ENCODE measurements at regions of chr5 and their contacts with region 1.

Region 1: DNA sequence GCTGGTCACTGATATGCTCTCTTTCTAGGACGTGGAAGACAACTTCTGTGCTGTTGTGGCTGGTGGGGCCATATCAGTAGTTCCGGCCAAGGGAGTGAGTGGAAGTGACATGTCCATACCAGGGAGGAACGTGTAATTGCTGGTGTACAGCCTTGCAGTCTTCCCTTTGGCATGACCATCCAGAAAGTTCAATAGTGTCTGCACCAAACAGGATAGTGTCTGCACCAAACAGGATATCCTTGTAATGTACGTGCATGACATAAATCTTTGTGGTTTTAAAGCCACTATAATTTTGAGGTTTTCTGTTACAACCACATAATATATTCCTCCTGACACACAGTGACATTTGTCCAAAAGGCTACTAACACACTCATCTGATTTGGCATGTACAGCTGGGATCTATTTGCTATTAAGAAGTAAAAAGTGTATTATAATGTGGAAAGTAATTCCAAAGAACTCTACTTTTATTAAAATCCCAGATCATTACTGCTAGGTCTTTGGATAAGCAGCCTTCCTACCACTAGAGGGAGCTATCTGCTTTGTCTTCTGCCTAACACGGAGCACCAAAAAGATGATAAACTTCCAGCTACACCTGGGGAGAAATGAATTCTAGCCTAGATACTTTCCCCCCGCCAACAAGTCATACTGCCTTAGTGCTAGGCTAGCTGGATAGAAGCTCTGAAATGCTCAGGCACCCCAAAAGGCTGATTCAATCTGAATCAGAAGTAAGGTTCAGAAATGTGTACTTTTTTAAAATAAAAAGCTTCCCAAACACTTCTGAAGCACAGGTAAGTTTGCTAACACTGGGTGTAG is 52.7 kb downstream of the RNF145 start:
- DNase-seq: peak; percentile 25
- H3K4me3 Mint-ChIP-seq: no peak overlapping the region
- H3K27ac Mint-ChIP-seq: no peak overlapping the region
- H3K4me1 Mint-ChIP-seq: peaks cover 42% of the 10 kb centered on the region
- H3K27me3 Mint-ChIP-seq: no peaks in the 10 kb centered on the region

Region 2: DNA sequence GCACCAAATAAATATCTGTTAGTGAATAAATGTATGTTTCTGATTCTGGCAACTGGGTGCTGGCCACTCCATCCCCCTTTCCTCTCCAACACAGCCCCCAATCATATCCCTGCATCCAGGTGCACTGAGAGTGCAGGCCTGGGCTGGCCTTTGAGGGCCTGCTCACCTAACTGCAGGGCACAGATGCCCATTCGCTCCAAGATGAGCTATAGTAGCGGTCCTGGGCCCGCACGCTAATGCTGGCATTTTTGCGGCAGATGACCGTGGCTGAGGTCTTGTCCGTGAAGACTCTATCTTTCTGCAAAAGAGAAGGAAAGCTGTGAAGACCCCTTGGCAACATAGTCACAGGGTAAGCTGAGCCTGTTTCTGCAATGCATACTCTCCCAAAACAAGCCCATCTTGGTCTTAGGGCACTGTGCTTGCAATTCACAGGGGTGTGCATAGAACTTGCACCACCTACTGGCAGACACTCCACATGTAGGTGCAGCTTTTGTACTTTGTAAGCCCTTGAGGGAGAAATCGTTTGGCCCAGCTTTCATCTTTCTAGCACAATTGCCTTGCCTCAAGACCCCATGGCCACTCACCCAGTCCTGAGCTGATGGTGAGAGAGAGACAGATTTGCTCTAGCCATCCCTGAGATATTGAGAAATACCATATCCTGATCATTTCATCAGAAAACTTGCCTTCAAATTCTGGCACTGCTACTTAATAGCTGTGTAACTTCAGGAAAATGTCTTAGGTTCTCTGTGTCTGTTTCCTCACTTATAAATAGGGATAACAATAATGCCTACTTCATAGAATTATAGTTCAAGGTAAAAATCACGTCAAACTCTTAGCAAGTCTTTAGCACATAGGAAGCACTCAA is 160.1 kb after region 1 on chr5:
- intact Hi-C with region 1: loop called (anchors 1 kb)
- DNase-seq: peak; percentile 20
- H3K4me3 Mint-ChIP-seq: no peak overlapping the region
- H3K27ac Mint-ChIP-seq: no peak overlapping the region
- H3K4me1 Mint-ChIP-seq: no peaks in the 10 kb centered on the region
- H3K27me3 Mint-ChIP-seq: peaks cover 19% of the 10 kb centered on the region

Region 3: DNA sequence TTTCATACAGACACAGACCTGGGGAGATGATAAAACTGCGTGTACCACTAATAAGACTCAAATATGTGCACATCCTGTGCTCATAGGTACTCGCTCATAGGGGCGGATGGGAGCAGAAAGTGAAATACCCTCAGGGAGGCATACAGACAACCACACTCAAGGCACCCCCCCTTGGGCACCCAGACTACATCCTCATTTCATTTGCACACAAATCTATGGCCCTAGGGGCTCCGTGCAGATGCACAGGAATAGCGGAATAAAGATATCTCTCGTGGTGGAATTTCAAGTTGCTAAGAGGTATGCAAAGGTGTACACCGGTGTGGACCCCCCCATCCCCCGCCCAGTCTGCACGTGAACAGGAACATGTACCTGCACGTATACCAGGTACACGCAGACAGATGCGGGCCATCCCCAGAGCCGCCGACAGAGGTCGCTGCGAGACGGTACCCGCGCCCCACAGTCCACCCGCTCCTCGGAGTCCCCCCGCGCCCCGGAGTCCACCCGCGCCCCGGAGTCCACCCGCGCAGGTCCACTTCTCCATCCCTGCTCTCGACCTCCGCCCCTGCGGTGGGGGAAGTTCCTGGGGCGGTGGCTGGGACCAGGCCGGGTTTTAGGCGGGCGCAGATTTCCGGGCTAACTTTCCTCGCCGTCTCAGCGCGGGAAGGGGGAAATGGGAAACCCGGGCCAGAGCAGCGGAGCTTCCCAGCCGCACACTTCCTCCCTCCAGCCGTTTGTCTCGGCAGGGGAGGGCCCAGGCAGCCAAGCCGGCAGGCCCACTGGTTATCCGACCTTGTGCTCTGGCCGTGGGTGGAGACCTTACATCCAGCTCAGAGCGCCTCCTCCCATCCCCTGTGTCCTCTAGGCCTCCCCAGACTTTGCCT is 174.7 kb after region 1 on chr5:
- intact Hi-C with region 1: loop called (anchors 5 kb)
- DNase-seq: peak; percentile 53
- H3K4me3 Mint-ChIP-seq: peak overlapping the region; percentile 72
- H3K27ac Mint-ChIP-seq: peak overlapping the region; percentile 58
- H3K4me1 Mint-ChIP-seq: peaks cover 56% of the 10 kb centered on the region
- H3K27me3 Mint-ChIP-seq: peaks cover 25% of the 10 kb centered on the region

Region 4: DNA sequence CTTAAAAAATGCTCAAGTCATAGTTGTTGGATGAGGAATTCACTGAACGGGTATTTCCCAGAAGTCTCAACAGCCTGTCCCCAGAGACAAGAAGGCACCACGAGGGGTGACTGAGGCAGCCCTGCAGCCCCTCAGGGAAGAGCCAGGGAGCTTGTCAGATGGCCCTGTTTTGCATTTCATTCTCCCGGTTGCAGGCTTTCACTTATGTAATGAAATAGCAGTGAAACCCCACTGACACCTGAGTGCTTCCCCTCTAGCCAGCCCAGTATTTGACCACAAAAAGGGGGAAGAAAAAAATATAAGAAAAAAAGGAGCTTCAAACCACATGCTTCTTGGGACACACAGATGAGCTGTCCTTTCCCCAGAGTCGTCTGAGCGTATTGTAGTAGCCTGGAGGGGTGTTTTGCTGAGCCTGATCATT is 249.0 kb after region 1 on chr5:
- intact Hi-C with region 1: loop called (anchors 5 kb)
- DNase-seq: no peak
- H3K4me3 Mint-ChIP-seq: no peak overlapping the region
- H3K27ac Mint-ChIP-seq: no peak overlapping the region
- H3K4me1 Mint-ChIP-seq: peaks cover 35% of the 10 kb centered on the region
- H3K27me3 Mint-ChIP-seq: peaks cover 54% of the 10 kb centered on the region

Region 5: GRCh38 chr5:159915904-159916840 is 759.5 kb after region 1 on chr5 and contains the start of gene ADRA1B:
- intact Hi-C with region 1: loop called (anchors 10 kb)
- DNase-seq: peak; percentile 9
- H3K4me3 Mint-ChIP-seq: peak within 1 kb of the TSS; percentile 66
- H3K27ac Mint-ChIP-seq: no peak within 1 kb of the TSS
- H3K4me1 Mint-ChIP-seq: peaks cover 11% of the 10 kb centered on the region
- H3K27me3 Mint-ChIP-seq: peaks cover 45% of the 10 kb centered on the region
- total RNA-seq, gene ADRA1B: not detected in 2 replicates

Region 6: GRCh38 chr5:159987031-159987674 is 830.5 kb after region 1 on chr5:
- intact Hi-C with region 1: loop called (anchors 2 kb)
- DNase-seq: peak; percentile 60
- H3K4me3 Mint-ChIP-seq: peak overlapping the region; percentile 53
- H3K27ac Mint-ChIP-seq: no peak overlapping the region
- H3K4me1 Mint-ChIP-seq: peaks cover 10% of the 10 kb centered on the region
- H3K27me3 Mint-ChIP-seq: peaks cover 68% of the 10 kb centered on the region